ENCODE measurements at regions of chr13 and their contacts with region 1.

Region 1: GRCh38 chr13:24220086-24220703 is 59.7 kb downstream of the SPATA13 start:
- DNase-seq: no peak
- ATAC-seq: peak; percentile 89
- H3K4me3 ChIP-seq: no peak overlapping the region
- H3K27ac ChIP-seq: no peak overlapping the region
- H3K4me1 ChIP-seq: peaks cover 35% of the 10 kb centered on the region
- H3K27me3 ChIP-seq: no peaks in the 10 kb centered on the region
- CTCF ChIP-seq: peak; percentile 65 to 89 (median 71)
- EP300 ChIP-seq: no peak
- POLR2A ChIP-seq: no peak
- RAD21 ChIP-seq: peak; percentile 97

Region 2: GRCh38 chr13:23921451-23921888 is 298.7 kb before region 1 on chr13:
- CTCF ChIA-PET with region 1: interaction called, 10 read pairs
- POLR2A ChIA-PET with region 1: no interaction called
- RAD21 ChIA-PET with region 1: interaction called, 6 read pairs
- SMC1A ChIA-PET with region 1: interaction called, 24 read pairs
- in situ Hi-C with region 1: no loop called
- intact Hi-C with region 1: loop called (anchors 1 kb)
- DNase-seq: no peak
- ATAC-seq: peak; percentile 66
- H3K4me3 ChIP-seq: no peak overlapping the region
- H3K27ac ChIP-seq: no peak overlapping the region
- H3K4me1 ChIP-seq: no peaks in the 10 kb centered on the region
- H3K27me3 ChIP-seq: no peaks in the 10 kb centered on the region
- CTCF ChIP-seq: peak; percentile 57 to 72 (median 58)
- EP300 ChIP-seq: no peak
- POLR2A ChIP-seq: no peak
- RAD21 ChIP-seq: peak; percentile 84

Region 3: DNA sequence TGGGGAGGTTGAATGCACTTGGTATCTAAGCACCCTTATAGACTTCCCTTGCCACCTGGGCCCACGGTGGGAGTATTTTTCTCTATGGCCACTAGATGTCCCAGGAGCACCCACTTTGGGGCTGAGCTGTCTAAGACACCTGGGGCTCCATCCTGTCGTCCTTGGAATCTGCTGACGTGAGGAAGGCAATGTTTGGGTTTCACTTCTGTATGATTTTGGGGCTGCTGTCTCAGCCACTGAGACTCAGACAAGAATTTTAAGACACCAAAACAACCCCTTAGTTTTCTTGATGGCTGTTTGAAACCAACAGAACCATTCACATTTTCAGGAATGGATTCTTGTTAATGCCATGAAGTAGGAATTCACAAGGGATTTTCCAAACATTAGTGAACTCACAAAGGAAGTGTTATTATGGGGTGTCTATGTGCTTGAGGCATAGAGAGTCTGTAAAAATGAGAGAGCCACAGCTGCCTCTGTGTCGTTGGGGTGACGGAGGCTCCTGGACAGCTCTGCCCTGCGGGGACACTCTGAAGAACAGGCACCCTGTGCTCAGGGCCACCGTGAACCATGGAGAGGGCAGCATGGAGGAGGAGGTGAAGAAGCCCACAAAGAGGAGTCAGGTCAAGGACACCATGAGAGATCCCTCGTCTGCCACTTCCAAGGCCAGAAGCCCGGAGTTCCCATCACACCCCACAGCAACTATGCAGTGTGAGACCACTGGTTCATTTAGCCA is 166.5 kb before region 1 on chr13:
- CTCF ChIA-PET with region 1: interaction called, 82 read pairs
- POLR2A ChIA-PET with region 1: no interaction called
- RAD21 ChIA-PET with region 1: interaction called, 10 read pairs
- SMC1A ChIA-PET with region 1: interaction called, 66 read pairs
- in situ Hi-C with region 1: no loop called
- intact Hi-C with region 1: loop called (anchors 1 kb)
- DNase-seq: peak; percentile 17
- ATAC-seq: peak; percentile 98
- H3K4me3 ChIP-seq: no peak overlapping the region
- H3K27ac ChIP-seq: no peak overlapping the region
- H3K4me1 ChIP-seq: no peaks in the 10 kb centered on the region
- H3K27me3 ChIP-seq: no peaks in the 10 kb centered on the region; a peak in 2 of 4 replicates
- CTCF ChIP-seq: peak; percentile 81 to 86 (median 82)
- EP300 ChIP-seq: no peak
- POLR2A ChIP-seq: no peak
- RAD21 ChIP-seq: peak; percentile 92